Dorsolateral prefrontal cortex (tissue), 120 donors: ENCODE measurements at regions of chr12 and their contacts with region 1.

Region 1: DNA sequence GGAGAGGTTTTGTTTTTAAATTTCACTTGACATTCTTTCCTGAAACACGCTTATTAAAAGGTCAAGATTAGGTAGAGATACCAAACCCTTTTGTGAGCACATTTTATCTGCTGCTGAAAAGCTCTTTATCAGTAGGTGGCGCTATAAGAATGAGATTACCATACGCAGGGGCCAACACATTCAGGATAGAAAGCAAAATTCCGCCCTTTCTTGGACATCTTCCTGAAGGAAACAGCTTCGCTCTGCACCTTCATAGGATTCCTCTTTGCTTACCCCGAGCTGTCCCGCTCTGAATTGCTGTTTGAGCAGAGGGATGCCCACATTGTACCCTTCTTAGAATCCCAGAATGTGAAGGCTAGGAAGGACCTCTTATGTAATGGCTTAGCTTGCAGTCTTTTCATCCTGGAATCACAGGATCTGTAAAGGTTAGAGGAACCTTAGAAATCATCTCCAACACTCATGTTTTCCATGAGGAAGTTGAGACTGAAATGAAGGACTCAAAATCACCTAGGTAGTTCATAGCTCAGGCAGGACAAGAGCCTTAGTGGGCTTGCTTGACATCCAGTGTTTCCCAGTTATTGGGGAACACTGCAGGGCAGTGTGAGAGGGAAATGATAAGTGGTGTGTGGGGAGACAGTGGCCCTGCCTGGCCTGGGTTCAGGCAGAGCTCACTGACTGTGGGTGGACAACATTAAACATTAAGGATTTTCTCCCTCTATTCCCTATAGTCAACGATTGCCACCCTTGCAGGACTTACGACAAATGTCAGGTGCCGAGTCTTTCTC is 38.7 kb upstream of the CRY1 start:
- DNase-seq: peak in 2 of 10 donors; percentile 18 to 39
- H3K4me3 ChIP-seq: peak overlapping the region in 7 of 59 donors; percentile 6 to 34 (median 22)
- H3K27ac ChIP-seq: peak overlapping the region in 4 of 59 donors; percentile 23 to 41 (median 38)
- H3K27me3 ChIP-seq: peaks cover 0 to 5% (median 0%) of the 10 kb centered on the region in 45 donors
- CTCF ChIP-seq: peak; percentile 66 to 95 (median 84)

Region 2: DNA sequence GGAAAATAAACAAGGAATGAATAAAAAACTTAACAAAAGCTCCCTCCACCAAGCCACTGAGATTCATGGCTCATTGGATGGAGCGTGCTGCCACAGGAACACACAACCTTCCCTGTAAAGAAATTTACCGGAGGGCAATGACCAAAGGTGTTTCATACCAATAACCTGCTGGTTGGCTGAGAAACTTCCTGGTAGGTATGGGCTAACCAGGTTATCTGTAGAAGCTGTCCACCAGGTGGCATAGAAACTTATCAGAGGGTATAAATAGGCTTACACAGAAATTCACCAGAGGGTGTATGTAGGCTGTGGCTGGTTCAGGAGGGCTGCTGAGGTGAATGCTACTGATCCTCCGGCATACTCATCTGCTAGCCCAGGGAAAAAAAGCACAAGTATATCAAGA is 118.0 kb before region 1 on chr12:
- intact Hi-C with region 1: no loop called
- DNase-seq: no peak
- H3K4me3 ChIP-seq: no peak overlapping the region
- H3K27ac ChIP-seq: no peak overlapping the region
- H3K27me3 ChIP-seq: no peaks in the 10 kb centered on the region
- CTCF ChIP-seq: no peak

Region 3: GRCh38 chr12:107025712-107026111 is 106.3 kb before region 1 on chr12:
- intact Hi-C with region 1: no loop called
- DNase-seq: no peak
- H3K4me3 ChIP-seq: no peak overlapping the region
- H3K27ac ChIP-seq: peak overlapping the region in 2 of 59 donors; percentile 23 to 31
- H3K27me3 ChIP-seq: no peaks in the 10 kb centered on the region
- CTCF ChIP-seq: no peak

Region 4: DNA sequence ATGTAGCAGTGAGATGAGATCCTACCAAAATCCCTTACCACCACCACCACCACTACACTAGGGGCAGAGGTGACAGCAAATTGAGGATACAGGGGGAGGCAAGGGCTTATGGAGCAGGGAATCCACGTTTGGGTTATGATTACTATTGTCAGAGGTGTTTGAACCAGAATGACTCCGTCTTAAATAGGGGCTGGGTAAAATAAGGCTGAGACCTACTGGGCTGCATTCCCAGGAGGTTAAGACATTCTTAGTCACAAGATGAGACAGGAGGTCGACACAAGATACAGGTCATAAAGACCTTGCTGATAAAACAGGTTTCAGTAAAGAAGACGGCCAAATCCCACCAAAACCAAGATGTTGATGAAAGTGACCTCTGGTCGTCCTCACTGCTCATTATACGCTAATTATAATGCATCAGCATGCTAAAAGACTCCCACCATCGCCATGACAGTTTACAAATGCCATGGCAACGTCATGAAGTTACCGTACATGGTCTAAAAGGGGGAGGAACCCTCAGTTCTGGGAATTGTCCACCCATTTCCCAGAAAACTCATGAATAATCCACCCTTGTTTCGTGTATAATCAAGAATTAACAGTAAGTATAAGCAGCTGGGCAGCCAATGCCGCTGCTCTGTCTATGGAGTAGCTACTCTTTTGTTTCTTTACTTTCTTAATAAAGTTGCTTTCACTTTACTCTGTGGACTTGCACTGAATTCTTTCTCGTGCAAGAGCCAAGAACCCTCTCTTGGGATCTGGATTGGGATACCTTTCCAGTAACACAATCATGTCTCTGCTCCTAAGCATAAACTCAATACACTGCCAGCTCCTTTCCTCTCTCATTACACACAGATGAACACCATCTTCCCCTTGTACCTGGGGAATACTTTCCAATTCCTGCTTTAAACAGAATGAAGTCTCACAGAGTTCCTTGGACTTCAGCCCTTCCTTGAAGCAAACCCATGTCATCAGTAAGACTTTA is 22.0 kb before region 1 on chr12:
- intact Hi-C with region 1: no loop called
- DNase-seq: no peak
- H3K4me3 ChIP-seq: peak overlapping the region in 18 of 59 donors; percentile 1 to 47 (median 26)
- H3K27ac ChIP-seq: no peak overlapping the region
- H3K27me3 ChIP-seq: peaks cover 0 to 13% (median 0%) of the 10 kb centered on the region in 45 donors
- CTCF ChIP-seq: no peak

Region 5: DNA sequence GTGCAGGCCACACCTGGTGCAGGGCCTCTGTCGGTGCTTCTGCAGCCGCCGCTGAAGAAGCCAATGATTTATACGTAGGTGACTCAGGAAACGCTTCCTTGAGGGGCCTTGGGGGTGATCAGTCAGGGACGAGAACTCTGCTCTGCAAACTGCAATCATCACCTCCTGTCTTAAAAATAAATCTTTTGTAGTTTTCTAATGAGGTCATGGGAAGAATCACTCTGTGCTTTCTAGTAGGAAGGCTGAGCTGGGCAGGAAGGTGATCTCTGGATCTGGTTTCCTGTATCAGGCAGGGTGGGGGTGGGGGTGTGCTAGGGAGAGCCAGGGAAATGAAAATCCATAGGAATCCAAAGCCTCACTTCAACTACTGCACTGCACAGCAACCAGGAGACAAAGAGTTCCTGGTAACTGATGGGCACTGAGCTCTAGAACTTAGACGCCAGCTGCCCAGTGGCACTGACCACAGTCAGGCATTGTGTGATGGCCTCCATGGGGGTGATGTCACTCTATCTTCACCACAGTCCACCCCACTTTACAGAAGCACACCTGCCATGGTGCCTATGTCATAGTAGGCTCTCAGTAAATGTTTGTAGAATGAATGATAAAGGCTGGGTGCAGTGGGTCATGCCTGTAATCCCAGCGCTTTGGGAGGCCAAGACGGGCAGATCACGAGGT is 261.2 kb after region 1 on chr12:
- intact Hi-C with region 1: loop called in 1 of 2 experiments (anchors 10 kb)
- DNase-seq: no peak
- H3K4me3 ChIP-seq: no peak overlapping the region
- H3K27ac ChIP-seq: no peak overlapping the region
- H3K27me3 ChIP-seq: peaks cover 0 to 4% (median 0%) of the 10 kb centered on the region in 45 donors
- CTCF ChIP-seq: no peak

Region 6: GRCh38 chr12:107404981-107405380 is 273.0 kb after region 1 on chr12:
- intact Hi-C with region 1: loop called in 1 of 2 experiments (anchors 2 kb)
- DNase-seq: no peak
- H3K4me3 ChIP-seq: no peak overlapping the region
- H3K27ac ChIP-seq: no peak overlapping the region
- H3K27me3 ChIP-seq: peaks cover 0 to 9% (median 0%) of the 10 kb centered on the region in 45 donors
- CTCF ChIP-seq: peak in 2 of 56 donors; percentile 7 to 11

Region 7: GRCh38 chr12:107607464-107608392 is 475.7 kb after region 1 on chr12:
- intact Hi-C with region 1: loop called (anchors 1 to 2 kb)
- DNase-seq: peak; percentile 73 to 91 (median 84)
- H3K4me3 ChIP-seq: no peak overlapping the region
- H3K27ac ChIP-seq: no peak overlapping the region
- H3K27me3 ChIP-seq: no peaks in the 10 kb centered on the region
- CTCF ChIP-seq: peak; percentile 61 to 96 (median 91)